Panc1 (cell line): ENCODE measurements at regions of chr17 and their contacts with region 1.

Region 1: GRCh38 chr17:55777471-55777971 is 26.7 kb downstream of the PCTP start:
- DNase-seq: no peak
- ATAC-seq: no peak
- H3K4me3 ChIP-seq: no peak overlapping the region
- H3K27ac ChIP-seq: no peak overlapping the region
- H3K4me1 ChIP-seq: no peaks in the 10 kb centered on the region
- H3K27me3 ChIP-seq: no peaks in the 10 kb centered on the region
- CTCF ChIP-seq: no peak

Region 2: GRCh38 chr17:55996825-55997224 is 219.3 kb after region 1 on chr17:
- CTCF ChIA-PET with region 1: no interaction called
- POLR2A ChIA-PET with region 1: no interaction called
- in situ Hi-C with region 1: no loop called
- intact Hi-C with region 1: no loop called
- DNase-seq: no peak
- ATAC-seq: no peak
- H3K4me3 ChIP-seq: no peak overlapping the region
- H3K27ac ChIP-seq: no peak overlapping the region
- H3K4me1 ChIP-seq: no peaks in the 10 kb centered on the region
- H3K27me3 ChIP-seq: no peaks in the 10 kb centered on the region
- CTCF ChIP-seq: no peak; the same call in 1 of the 2 replicates

Region 3: GRCh38 chr17:56064506-56064905 is 287.0 kb after region 1 on chr17:
- CTCF ChIA-PET with region 1: no interaction called
- POLR2A ChIA-PET with region 1: no interaction called
- in situ Hi-C with region 1: no loop called
- intact Hi-C with region 1: no loop called
- DNase-seq: no peak
- ATAC-seq: no peak
- H3K4me3 ChIP-seq: no peak overlapping the region
- H3K27ac ChIP-seq: no peak overlapping the region
- H3K4me1 ChIP-seq: no peaks in the 10 kb centered on the region
- H3K27me3 ChIP-seq: no peaks in the 10 kb centered on the region
- CTCF ChIP-seq: no peak

Region 4: GRCh38 chr17:56845934-56846333 is 1068.4 kb after region 1 on chr17:
- CTCF ChIA-PET with region 1: no interaction called
- POLR2A ChIA-PET with region 1: interaction called, 10 read pairs
- in situ Hi-C with region 1: no loop called
- intact Hi-C with region 1: no loop called
- DNase-seq: no peak
- ATAC-seq: no peak
- H3K4me3 ChIP-seq: no peak overlapping the region
- H3K27ac ChIP-seq: no peak overlapping the region
- H3K4me1 ChIP-seq: no peaks in the 10 kb centered on the region
- H3K27me3 ChIP-seq: no peaks in the 10 kb centered on the region
- CTCF ChIP-seq: no peak